HEK293 (cell line): ENCODE measurements at regions of chr2 and their contacts with region 1.

Region 1: GRCh38 chr2:64052468-64053241 is 33.4 kb upstream of the VPS54 start:
- H3K4me3 ChIP-seq: no peak overlapping the region
- H3K27ac ChIP-seq: no peak overlapping the region
- H3K4me1 ChIP-seq: no peaks in the 10 kb centered on the region; the same call in 1 of the 2 replicates
- CTCF ChIP-seq: no peak

Region 2: GRCh38 chr2:64311948-64312621 is 259.4 kb after region 1 on chr2:
- CTCF ChIA-PET with region 1: interaction called, 15 read pairs
- POLR2A ChIA-PET with region 1: no interaction called
- H3K4me3 ChIP-seq: no peak overlapping the region
- H3K27ac ChIP-seq: no peak overlapping the region
- H3K4me1 ChIP-seq: peaks cover 7% of the 10 kb centered on the region; the same call in 1 of the 2 replicates
- CTCF ChIP-seq: peak; percentile 33; the same call in 1 of the 2 replicates